ENCODE measurements at regions of chr17 and their contacts with region 1.

Region 1: DNA sequence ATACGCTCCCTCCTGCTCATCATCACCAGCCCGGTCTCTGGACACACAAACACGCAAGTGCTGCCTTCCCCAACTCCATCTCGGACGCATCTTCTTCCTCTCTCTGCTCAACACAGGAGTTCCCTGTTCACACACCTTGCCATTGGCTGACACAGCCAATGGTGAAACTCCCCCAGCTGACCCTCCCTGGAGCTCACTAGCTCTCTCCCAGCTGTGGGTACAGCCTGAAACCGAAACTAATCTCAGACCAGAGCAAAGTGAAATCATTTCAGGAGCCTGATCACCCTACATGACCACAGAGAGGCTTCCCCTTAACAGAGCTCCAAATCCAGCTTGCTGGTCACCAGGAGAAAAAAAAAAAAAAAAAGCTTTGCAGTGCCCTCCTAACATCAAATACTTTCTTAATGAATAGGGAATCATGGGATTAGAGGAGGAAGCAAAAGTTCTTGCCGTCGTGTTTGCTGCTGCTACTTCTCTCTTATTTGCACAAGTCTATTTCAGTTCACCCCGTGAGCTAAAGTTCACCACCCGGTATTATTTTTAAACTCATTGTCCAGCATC is 8.3 kb downstream of the CUEDC1 start:
- DNase-seq: no peak
- H3K4me3 ChIP-seq: peak overlapping the region; percentile 10 to 62 (median 37)
- H3K27ac ChIP-seq: peak overlapping the region; percentile 86 to 98 (median 94)
- H3K4me1 ChIP-seq: peaks cover 74 to 100% (median 86%) of the 10 kb centered on the region in 3 donors
- H3K27me3 ChIP-seq: no peaks in the 10 kb centered on the region
- CTCF ChIP-seq: no peak
- POLR2A ChIP-seq: peak in 1 of 4 donors; percentile 11

Region 2: DNA sequence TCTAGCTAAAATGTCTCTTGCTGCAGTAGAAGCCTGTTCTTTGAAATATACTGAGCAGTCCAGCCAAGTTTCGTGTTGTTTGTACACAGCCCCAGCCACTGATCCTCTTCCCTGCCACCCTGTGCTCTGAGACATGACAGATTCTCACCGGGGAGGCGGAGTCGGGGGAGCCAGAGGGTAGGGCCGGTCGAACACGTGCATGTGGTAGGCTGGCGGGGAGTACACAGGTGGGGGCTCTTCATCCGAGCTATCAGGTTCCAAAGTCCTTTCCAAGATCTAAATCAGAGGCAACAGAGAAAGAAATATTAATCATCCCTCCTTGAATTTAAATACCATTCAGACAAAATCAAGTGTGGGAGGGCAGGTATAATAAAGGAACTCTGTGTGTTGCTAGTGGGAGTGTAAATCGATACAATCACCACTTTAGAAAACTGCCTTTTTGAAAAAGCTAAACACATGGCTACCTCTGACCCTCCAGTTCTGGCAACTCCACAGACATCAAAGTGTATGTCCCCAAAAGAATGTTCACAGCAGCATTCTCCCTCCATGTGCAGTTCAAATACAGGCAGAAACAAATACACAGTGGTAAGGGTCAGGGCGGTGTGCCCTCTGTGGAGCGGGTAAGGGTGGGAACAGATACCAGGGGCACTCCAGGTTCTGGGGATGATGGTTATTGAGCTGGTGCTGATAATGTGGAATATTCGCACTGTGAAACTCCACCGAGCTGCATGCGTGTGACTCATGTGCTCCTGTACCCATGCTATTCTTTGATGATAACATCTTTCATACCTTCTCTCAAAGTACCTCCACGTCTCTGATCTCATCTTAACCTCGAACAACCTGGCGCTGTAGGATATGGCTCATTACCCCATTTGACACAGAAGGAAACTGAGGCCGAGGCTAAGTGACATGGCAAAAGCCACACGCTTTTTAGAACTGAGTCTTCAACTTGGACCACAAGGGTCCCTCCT is 67.1 kb before region 1 on chr17:
- intact Hi-C with region 1: no loop called
- DNase-seq: no peak
- H3K4me3 ChIP-seq: no peak overlapping the region
- H3K27ac ChIP-seq: peak overlapping the region; percentile 13 to 78 (median 56)
- H3K4me1 ChIP-seq: peaks cover 17 to 66% (median 46%) of the 10 kb centered on the region in 3 donors
- H3K27me3 ChIP-seq: no peaks in the 10 kb centered on the region
- CTCF ChIP-seq: no peak
- POLR2A ChIP-seq: no peak

Region 3: GRCh38 chr17:57892146-57892828 is 54.6 kb before region 1 on chr17:
- intact Hi-C with region 1: loop called (anchors 10 kb)
- DNase-seq: peak; percentile 33
- H3K4me3 ChIP-seq: peak overlapping the region in 1 of 4 donors; percentile 45
- H3K27ac ChIP-seq: peak overlapping the region; percentile 85 to 96 (median 94)
- H3K4me1 ChIP-seq: peaks cover 53 to 89% (median 71%) of the 10 kb centered on the region in 3 donors
- H3K27me3 ChIP-seq: no peaks in the 10 kb centered on the region
- CTCF ChIP-seq: peak; percentile 95 to 99 (median 98)
- POLR2A ChIP-seq: no peak

Region 4: GRCh38 chr17:57995076-57995956 is 48.4 kb after region 1 on chr17:
- intact Hi-C with region 1: loop called (anchors 10 kb)
- DNase-seq: no peak
- H3K4me3 ChIP-seq: no peak overlapping the region
- H3K27ac ChIP-seq: peak overlapping the region in 3 of 4 donors; percentile 48 to 58 (median 49)
- H3K4me1 ChIP-seq: peaks cover 0 to 43% (median 3%) of the 10 kb centered on the region in 3 donors
- H3K27me3 ChIP-seq: no peaks in the 10 kb centered on the region
- CTCF ChIP-seq: peak; percentile 55 to 83 (median 76)
- POLR2A ChIP-seq: no peak